ENCODE measurements at regions of chr19 and their contacts with region 1.

Region 1: DNA sequence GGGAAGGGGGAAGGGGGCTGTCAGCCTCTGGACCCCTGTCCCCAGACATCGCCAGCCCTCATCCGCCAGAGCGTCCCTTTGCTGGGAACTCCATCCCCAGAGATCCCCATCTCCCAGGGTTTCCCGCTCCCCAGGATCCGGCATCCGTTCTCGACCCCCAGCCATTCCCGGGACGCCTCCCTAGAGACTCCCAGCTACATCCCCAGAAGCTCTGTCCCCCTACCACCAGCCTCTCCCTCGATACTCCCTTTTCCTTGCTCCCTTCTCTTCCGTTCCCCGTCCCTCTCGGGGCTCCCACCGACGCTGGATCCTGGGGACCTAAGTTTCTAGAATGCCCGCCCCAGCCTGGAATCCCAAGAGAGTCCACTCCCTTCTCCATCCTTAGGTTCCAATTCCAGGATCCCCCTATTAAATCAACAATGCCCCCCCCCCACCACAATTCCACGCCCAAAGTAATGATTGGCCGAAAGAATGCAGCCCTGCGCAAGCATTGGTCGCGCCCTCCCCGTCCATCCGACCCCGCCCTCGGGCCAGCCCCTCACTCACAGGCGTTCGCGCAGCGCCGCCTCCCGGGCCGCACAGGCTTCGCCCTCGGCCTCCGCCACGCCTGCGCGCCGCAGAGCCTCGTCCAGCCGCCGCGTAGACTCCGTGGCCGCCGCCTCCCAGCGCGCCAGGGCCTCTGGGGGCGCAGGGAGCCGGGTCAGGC is 3.2 kb downstream of the CCDC194 start:
- DNase-seq: peak; percentile 75 to 94 (median 90)
- ATAC-seq: peak; percentile 99
- H3K4me3 ChIP-seq: peak overlapping the region; percentile 63 to 66
- H3K4me3 Mint-ChIP-seq: peak overlapping the region; percentile 87
- H3K27ac ChIP-seq: no peak overlapping the region
- H3K27ac Mint-ChIP-seq: no peak overlapping the region
- H3K4me1 ChIP-seq: peaks cover 22% of the 10 kb centered on the region
- H3K4me1 Mint-ChIP-seq: peaks cover 18% of the 10 kb centered on the region
- H3K27me3 ChIP-seq: no peaks in the 10 kb centered on the region
- H3K27me3 Mint-ChIP-seq: no peaks in the 10 kb centered on the region
- CTCF ChIP-seq: peak; percentile 62

Region 2: GRCh38 chr19:16763636-16764035 is 627.2 kb before region 1 on chr19:
- CTCF ChIA-PET with region 1: no interaction called
- POLR2A ChIA-PET with region 1: no interaction called
- intact Hi-C with region 1: no loop called
- DNase-seq: no peak
- ATAC-seq: no peak
- H3K4me3 ChIP-seq: no peak overlapping the region
- H3K4me3 Mint-ChIP-seq: no peak overlapping the region
- H3K27ac ChIP-seq: no peak overlapping the region
- H3K27ac Mint-ChIP-seq: no peak overlapping the region
- H3K4me1 ChIP-seq: no peaks in the 10 kb centered on the region
- H3K4me1 Mint-ChIP-seq: no peaks in the 10 kb centered on the region
- H3K27me3 ChIP-seq: peaks cover 0 to 6% of the 10 kb centered on the region in 2 experiments
- H3K27me3 Mint-ChIP-seq: peaks cover 51% of the 10 kb centered on the region
- CTCF ChIP-seq: no peak

Region 3: DNA sequence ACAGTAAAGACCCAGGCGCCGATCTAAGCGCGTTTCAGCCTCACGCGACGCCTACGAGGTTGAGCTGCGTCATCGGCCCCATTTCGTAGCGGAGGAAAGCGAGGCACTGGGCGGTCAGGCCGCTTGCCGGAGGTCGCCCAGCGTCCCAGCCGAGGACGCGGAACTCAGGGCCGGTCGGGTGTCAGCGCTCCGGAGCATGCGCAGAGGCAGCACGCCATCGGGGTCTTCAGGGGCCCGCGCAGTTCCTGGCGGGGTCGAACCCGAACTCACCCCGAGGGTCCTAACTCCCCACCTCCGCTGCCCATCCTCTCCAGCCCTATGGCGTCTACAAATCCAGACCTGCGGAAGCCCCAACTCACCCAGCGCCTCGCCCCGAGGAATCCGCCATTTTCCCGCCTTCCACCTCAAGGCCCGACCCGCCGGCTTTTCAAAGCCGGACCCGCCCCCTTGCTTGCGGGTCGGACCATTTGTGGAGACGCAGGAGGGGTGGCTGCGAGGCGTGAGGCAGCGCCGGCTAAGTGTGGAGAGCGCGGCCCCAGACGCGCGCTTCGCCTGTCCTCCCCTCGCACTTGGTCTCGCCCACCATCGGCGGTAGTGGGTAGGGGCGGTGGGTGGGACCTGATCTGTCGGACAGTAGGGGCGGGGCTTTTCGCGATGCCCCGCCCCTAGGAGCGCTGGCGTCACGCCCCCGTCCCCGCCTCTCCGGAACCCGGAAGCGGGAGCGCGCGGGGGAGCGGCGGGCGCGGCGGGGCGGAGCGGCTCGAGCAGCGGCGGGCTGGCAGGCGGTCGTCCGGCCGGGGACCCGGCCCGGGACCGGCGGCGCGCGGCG is 315.6 kb before region 1 on chr19 and contains the starts of genes HAUS8 and MYO9B:
- CTCF ChIA-PET with region 1: no interaction called
- POLR2A ChIA-PET with region 1: no interaction called
- intact Hi-C with region 1: loop called in 1 of 2 experiments (anchors 5 kb)
- DNase-seq: peak; percentile 98 to 100 (median 100)
- ATAC-seq: peak; percentile 92
- H3K4me3 ChIP-seq: peak within 1 kb of the TSS; percentile 79 to 94
- H3K4me3 Mint-ChIP-seq: peak within 1 kb of the TSS; percentile 93
- H3K27ac ChIP-seq: peak within 1 kb of the TSS; percentile 85 to 88
- H3K27ac Mint-ChIP-seq: peak within 1 kb of the TSS; percentile 98
- H3K4me1 ChIP-seq: peaks cover 51% of the 10 kb centered on the region
- H3K4me1 Mint-ChIP-seq: peaks cover 62% of the 10 kb centered on the region
- H3K27me3 ChIP-seq: no peaks in the 10 kb centered on the region
- H3K27me3 Mint-ChIP-seq: no peaks in the 10 kb centered on the region
- CTCF ChIP-seq: no peak
- total RNA-seq, gene HAUS8: 29.3 to 33.9 TPM
- total RNA-seq, gene MYO9B: 221 to 238 TPM

Region 4: GRCh38 chr19:17292286-17293097 is 98.3 kb before region 1 on chr19:
- CTCF ChIA-PET with region 1: interaction called, 45 read pairs
- POLR2A ChIA-PET with region 1: interaction called, 4 read pairs
- intact Hi-C with region 1: loop called (anchors 1 kb)
- DNase-seq: peak; percentile 61 to 90 (median 81)
- ATAC-seq: peak; percentile 96
- H3K4me3 ChIP-seq: peak overlapping the region; percentile 73 to 94
- H3K4me3 Mint-ChIP-seq: peak overlapping the region; percentile 86
- H3K27ac ChIP-seq: no peak overlapping the region
- H3K27ac Mint-ChIP-seq: peak overlapping the region; percentile 77
- H3K4me1 ChIP-seq: peaks cover 5% of the 10 kb centered on the region
- H3K4me1 Mint-ChIP-seq: peaks cover 6% of the 10 kb centered on the region
- H3K27me3 ChIP-seq: no peaks in the 10 kb centered on the region
- H3K27me3 Mint-ChIP-seq: peaks cover 3% of the 10 kb centered on the region
- CTCF ChIP-seq: peak; percentile 82

Region 5: GRCh38 chr19:17346109-17346671 is 44.6 kb before region 1 on chr19:
- CTCF ChIA-PET with region 1: interaction called, 107 read pairs
- POLR2A ChIA-PET with region 1: no interaction called
- intact Hi-C with region 1: loop called (anchors 1 kb)
- DNase-seq: peak; percentile 57 to 87 (median 78)
- ATAC-seq: peak; percentile 99
- H3K4me3 ChIP-seq: no peak overlapping the region
- H3K4me3 Mint-ChIP-seq: no peak overlapping the region
- H3K27ac ChIP-seq: no peak overlapping the region
- H3K27ac Mint-ChIP-seq: no peak overlapping the region
- H3K4me1 ChIP-seq: no peaks in the 10 kb centered on the region
- H3K4me1 Mint-ChIP-seq: peaks cover 5% of the 10 kb centered on the region
- H3K27me3 ChIP-seq: peaks cover 0 to 5% of the 10 kb centered on the region in 2 experiments
- H3K27me3 Mint-ChIP-seq: peaks cover 8% of the 10 kb centered on the region
- CTCF ChIP-seq: peak; percentile 97

Region 6: GRCh38 chr19:17448131-17448967 is 57.5 kb after region 1 on chr19 and contains the start of gene TMEM221:
- CTCF ChIA-PET with region 1: interaction called, 6 read pairs
- POLR2A ChIA-PET with region 1: no interaction called
- intact Hi-C with region 1: loop called (anchors 1 to 5 kb)
- DNase-seq: peak; percentile 16 to 76 (median 59)
- ATAC-seq: peak; percentile 81
- H3K4me3 ChIP-seq: peak within 1 kb of the TSS in 1 of 2 experiments; percentile 15
- H3K4me3 Mint-ChIP-seq: peak within 1 kb of the TSS; percentile 53
- H3K27ac ChIP-seq: no peak within 1 kb of the TSS
- H3K27ac Mint-ChIP-seq: no peak within 1 kb of the TSS
- H3K4me1 ChIP-seq: no peaks in the 10 kb centered on the region
- H3K4me1 Mint-ChIP-seq: peaks cover 11% of the 10 kb centered on the region
- H3K27me3 ChIP-seq: peaks cover 3 to 20% of the 10 kb centered on the region in 2 experiments
- H3K27me3 Mint-ChIP-seq: peaks cover 17% of the 10 kb centered on the region
- CTCF ChIP-seq: peak; percentile 61
- total RNA-seq, gene TMEM221: not detected

Region 7: GRCh38 chr19:17687857-17688784 is 297.3 kb after region 1 on chr19 and contains the start of gene UNC13A:
- CTCF ChIA-PET with region 1: no interaction called
- POLR2A ChIA-PET with region 1: no interaction called
- intact Hi-C with region 1: no loop called
- DNase-seq: peak; percentile 1 to 63 (median 52)
- ATAC-seq: peak; percentile 93
- H3K4me3 ChIP-seq: no peak within 1 kb of the TSS
- H3K4me3 Mint-ChIP-seq: no peak within 1 kb of the TSS
- H3K27ac ChIP-seq: no peak within 1 kb of the TSS
- H3K27ac Mint-ChIP-seq: no peak within 1 kb of the TSS
- H3K4me1 ChIP-seq: peaks cover 15% of the 10 kb centered on the region
- H3K4me1 Mint-ChIP-seq: peaks cover 13% of the 10 kb centered on the region
- H3K27me3 ChIP-seq: peaks cover 21 to 40% of the 10 kb centered on the region in 2 experiments
- H3K27me3 Mint-ChIP-seq: peaks cover 65% of the 10 kb centered on the region
- CTCF ChIP-seq: no peak
- total RNA-seq, gene UNC13A: 0.03 to 0.06 TPM

Measured in CD8-positive, alpha-beta T cell (primary cell).